ENCODE measurements at regions of chr18 and their contacts with region 1.

Region 1: DNA sequence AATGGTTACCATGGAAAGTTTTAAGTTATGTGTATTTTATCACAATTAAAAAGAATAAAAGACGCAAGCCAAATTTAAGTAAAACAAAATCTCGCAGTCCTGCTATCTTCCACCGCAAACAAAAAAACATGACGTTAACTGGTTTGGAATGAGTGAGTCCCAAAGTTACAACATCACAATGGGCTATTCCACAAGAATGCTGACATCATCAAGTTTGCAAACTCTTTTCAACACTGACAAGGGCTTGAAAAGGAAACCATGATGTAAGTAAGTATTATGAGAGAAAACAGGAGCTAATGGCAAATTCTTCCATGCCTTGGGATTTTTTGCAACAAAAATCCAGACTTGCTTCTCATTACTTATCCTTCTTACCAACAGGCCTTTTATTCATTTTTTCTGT is 31.1 kb downstream of the SIGLEC15 start:
- DNase-seq: no peak
- H3K4me3 Mint-ChIP-seq: no peak overlapping the region
- H3K27ac Mint-ChIP-seq: no peak overlapping the region
- H3K4me1 Mint-ChIP-seq: no peaks in the 10 kb centered on the region
- H3K27me3 Mint-ChIP-seq: no peaks in the 10 kb centered on the region

Region 2: GRCh38 chr18:45879681-45880655 is 23.4 kb after region 1 on chr18:
- CTCF ChIA-PET with region 1: interaction called, 13 read pairs
- POLR2A ChIA-PET with region 1: no interaction called
- DNase-seq: peak; percentile 68
- H3K4me3 Mint-ChIP-seq: no peak overlapping the region
- H3K27ac Mint-ChIP-seq: no peak overlapping the region
- H3K4me1 Mint-ChIP-seq: peaks cover 10% of the 10 kb centered on the region
- H3K27me3 Mint-ChIP-seq: no peaks in the 10 kb centered on the region